Right ventricle myocardium inferior (tissue), 1 donor: ENCODE measurements at regions of chr14 and their contacts with region 1.

Region 1: DNA sequence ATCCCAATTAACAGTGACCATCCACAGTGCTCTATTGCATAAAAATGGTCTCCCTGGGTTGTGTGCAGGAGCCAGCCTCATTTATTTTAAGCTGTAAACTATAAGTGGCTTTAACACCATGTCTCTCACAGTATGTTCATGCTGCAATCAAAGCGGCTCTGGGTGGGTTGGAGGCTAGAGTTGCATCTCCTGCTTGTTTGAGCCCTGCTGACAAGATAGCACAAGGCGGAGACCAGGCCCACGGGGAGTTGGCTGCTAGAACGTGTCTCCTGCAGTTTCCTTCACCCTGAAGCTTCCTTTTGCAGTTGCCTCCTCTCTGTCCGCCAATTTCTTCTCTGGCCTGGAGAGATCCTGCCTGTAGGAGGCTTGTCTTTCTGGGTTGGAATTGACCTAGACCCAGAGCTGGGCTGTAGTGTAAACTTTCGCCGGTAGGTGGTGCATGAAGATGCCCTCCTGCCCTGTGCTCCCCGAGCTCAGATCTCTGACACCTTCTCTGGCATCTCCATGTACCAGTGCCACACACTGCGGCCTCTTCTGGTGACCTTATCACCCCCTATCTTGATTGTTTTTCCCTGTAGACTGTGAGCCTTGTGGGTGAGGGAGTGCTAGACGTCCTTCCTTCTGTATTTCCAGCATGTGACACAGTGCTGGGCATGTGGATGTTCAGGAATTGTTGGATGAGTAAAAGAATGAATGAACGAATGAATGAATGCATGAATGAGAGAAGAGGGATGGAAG is 10.3 kb downstream of the OTUB2 start:
- DNase-seq: no peak
- ATAC-seq: peak; percentile 86

Region 2: GRCh38 chr14:94136575-94137331 is 100.3 kb after region 1 on chr14:
- intact Hi-C with region 1: loop called (anchors 1 kb)
- DNase-seq: peak; percentile 94
- ATAC-seq: peak; percentile 77

Region 3: DNA sequence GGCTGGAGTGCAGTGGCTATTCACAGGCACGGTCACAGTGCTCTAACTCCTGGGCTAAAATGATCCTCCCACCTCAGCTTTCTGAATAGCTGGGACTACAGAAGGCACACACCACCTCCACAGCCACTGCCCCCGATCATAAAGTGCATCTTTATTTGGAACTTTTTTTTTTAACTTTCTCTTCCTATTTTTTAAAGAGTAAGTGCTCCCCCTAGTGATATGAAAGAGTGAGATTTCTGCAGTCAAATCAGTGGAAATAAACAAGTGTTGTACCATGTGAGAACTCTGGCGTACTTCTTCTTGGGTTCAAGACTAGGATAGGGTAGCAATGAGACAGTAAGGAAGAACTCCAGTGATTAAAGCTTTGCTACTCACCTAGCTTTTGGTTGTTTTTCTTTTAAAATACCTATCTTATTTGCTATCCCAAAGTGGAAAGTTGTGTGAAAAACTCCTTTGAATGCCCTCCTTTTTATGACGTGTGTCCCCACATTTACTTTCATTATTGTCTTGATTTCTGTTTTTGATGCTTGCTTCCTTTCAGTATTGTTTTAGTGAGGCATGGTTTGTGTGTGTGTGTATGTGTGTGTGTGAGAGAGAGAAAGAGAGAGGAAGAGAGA is 144.3 kb after region 1 on chr14:
- intact Hi-C with region 1: loop called (anchors 2 kb)
- DNase-seq: no peak
- ATAC-seq: peak; percentile 65